Aorta (tissue), 5 donors: ENCODE measurements at regions of chr11 and their contacts with region 1.

Region 1: DNA sequence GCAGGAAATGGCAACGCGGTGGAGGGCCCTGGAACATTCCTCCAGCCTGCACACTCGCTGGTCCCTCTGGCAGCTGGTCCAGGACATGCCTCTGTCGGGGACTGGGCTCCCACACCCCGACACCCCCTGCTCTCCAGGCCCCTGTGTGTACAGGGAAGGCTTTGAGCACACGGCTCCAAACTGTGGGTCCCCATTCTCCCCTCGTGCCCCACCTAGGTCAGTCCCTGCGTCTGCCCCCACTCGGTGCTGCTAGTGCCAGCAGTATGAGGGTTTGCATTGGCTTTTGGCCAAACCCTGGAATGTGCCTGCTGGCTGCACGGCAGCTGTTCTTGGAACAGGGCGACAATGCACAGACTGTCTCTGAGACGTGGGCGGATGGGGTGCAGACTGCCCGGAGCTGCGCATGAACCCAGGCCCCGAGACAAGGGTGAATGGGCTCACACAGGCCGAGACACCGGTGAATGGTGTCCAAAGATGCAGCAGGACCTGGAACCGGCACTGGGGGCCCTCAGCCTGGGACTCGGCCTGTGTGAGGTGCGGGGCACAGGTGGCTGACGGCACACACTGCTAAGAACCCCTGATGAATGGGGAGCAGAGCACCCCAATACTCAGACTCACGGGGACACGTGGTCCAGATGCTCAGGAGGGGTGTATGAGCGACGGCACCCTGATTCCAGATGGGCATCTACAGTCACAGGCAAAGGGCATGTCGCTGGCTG is 7.5 kb upstream of the SYT8 start:
- DNase-seq: peak; percentile 91
- ATAC-seq: peak; percentile 75
- H3K4me3 ChIP-seq: no peak overlapping the region
- H3K27ac ChIP-seq: peak overlapping the region; percentile 64 to 91
- H3K4me1 ChIP-seq: no peaks in the 10 kb centered on the region
- H3K27me3 ChIP-seq: no peaks in the 10 kb centered on the region

Region 2: GRCh38 chr11:1559119-1559951 is 267.9 kb before region 1 on chr11:
- intact Hi-C with region 1: loop called in 1 of 2 experiments (anchors 5 kb)
- DNase-seq: peak; percentile 96 to 98
- ATAC-seq: peak; percentile 90
- H3K4me3 ChIP-seq: no peak overlapping the region
- H3K27ac ChIP-seq: peak overlapping the region; percentile 96 to 97
- H3K4me1 ChIP-seq: no peaks in the 10 kb centered on the region
- H3K27me3 ChIP-seq: no peaks in the 10 kb centered on the region

Region 3: GRCh38 chr11:1749414-1750312 is 77.6 kb before region 1 on chr11:
- intact Hi-C with region 1: loop called (anchors 2 to 5 kb)
- DNase-seq: peak; percentile 80 to 83
- ATAC-seq: no peak
- H3K4me3 ChIP-seq: peak overlapping the region; percentile 56 to 59
- H3K27ac ChIP-seq: peak overlapping the region; percentile 54 to 86
- H3K4me1 ChIP-seq: no peaks in the 10 kb centered on the region
- H3K27me3 ChIP-seq: no peaks in the 10 kb centered on the region

Region 4: DNA sequence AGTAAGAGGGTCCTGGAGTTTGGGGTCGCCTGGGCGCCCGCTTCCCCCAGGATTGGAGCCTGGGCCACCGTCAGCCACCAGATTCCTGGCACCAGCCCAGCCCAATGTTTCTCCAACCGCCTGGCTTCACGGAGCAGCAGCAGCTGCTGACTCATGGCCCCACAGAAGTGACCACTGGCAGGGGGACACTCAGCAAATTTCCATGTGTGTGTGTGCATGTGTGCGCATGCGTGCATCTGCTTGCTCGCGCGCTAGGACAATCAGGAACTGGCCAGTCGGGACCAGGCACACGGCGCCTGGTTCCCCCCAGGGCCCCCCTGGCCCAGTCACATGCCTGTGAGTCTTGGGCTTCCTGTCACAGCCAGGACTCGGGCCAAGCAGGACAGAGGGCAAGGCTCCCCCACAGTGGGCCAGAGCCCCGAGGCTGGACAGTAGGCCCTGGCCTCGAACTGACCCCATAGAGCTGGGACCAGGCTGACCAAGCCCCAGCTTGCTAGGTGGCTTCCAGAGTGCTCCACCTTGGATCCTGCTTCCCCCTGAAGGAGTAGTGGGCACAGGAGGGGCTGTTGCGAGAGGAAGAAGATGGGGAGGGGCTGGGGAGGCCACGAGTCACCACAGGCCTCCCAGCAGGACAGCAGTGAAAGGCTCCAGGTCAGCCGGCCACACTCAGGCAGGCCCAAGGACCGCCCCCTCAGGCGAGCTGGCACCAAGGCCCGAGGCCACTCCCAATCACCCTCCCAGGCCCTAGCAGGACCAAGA is 66.7 kb before region 1 on chr11:
- intact Hi-C with region 1: loop called (anchors 2 to 5 kb)
- DNase-seq: peak; percentile 94 to 97
- ATAC-seq: peak; percentile 77
- H3K4me3 ChIP-seq: no peak overlapping the region
- H3K27ac ChIP-seq: peak overlapping the region in 1 of 2 donors; percentile 68
- H3K4me1 ChIP-seq: no peaks in the 10 kb centered on the region
- H3K27me3 ChIP-seq: no peaks in the 10 kb centered on the region